Caco-2 (cell line): ENCODE measurements at regions of chr7 and their contacts with region 1.

Region 1: GRCh38 chr7:134355927-134356326 is 39.2 kb upstream of the SLC35B4 start:
- DNase-seq: no peak
- H3K4me3 ChIP-seq: no peak overlapping the region
- H3K4me3 Mint-ChIP-seq: no peak overlapping the region
- H3K27ac Mint-ChIP-seq: no peak overlapping the region
- H3K4me1 ChIP-seq: no peaks in the 10 kb centered on the region
- H3K4me1 Mint-ChIP-seq: no peaks in the 10 kb centered on the region
- H3K27me3 ChIP-seq: no peaks in the 10 kb centered on the region
- H3K27me3 Mint-ChIP-seq: peaks cover 3% of the 10 kb centered on the region
- CTCF ChIP-seq: no peak

Region 2: GRCh38 chr7:134016223-134016941 is 339.5 kb before region 1 on chr7:
- CTCF ChIA-PET with region 1: no interaction called
- POLR2A ChIA-PET with region 1: no interaction called
- intact Hi-C with region 1: loop called (anchors 1 kb)
- DNase-seq: peak; percentile 34 to 52
- H3K4me3 ChIP-seq: no peak overlapping the region
- H3K4me3 Mint-ChIP-seq: no peak overlapping the region
- H3K27ac Mint-ChIP-seq: no peak overlapping the region
- H3K4me1 ChIP-seq: peaks cover 8% of the 10 kb centered on the region; the same call in 1 of the 2 replicates
- H3K4me1 Mint-ChIP-seq: peaks cover 12% of the 10 kb centered on the region
- H3K27me3 ChIP-seq: no peaks in the 10 kb centered on the region
- H3K27me3 Mint-ChIP-seq: no peaks in the 10 kb centered on the region
- CTCF ChIP-seq: peak; percentile 77 to 83

Region 3: GRCh38 chr7:134126966-134127848 is 228.7 kb before region 1 on chr7 and contains the start of gene LRGUK:
- CTCF ChIA-PET with region 1: no interaction called
- POLR2A ChIA-PET with region 1: no interaction called
- intact Hi-C with region 1: loop called (anchors 2 kb)
- DNase-seq: peak; percentile 84 to 87
- H3K4me3 ChIP-seq: peak within 1 kb of the TSS; percentile 79
- H3K4me3 Mint-ChIP-seq: peak within 1 kb of the TSS; percentile 77
- H3K27ac Mint-ChIP-seq: peak within 1 kb of the TSS; percentile 63
- H3K4me1 ChIP-seq: no peaks in the 10 kb centered on the region
- H3K4me1 Mint-ChIP-seq: peaks cover 7% of the 10 kb centered on the region
- H3K27me3 ChIP-seq: no peaks in the 10 kb centered on the region
- H3K27me3 Mint-ChIP-seq: peaks cover 27% of the 10 kb centered on the region
- CTCF ChIP-seq: no peak
- total RNA-seq, gene LRGUK: 0.09 TPM in 1 of 2 replicates, not detected in the other

Region 4: DNA sequence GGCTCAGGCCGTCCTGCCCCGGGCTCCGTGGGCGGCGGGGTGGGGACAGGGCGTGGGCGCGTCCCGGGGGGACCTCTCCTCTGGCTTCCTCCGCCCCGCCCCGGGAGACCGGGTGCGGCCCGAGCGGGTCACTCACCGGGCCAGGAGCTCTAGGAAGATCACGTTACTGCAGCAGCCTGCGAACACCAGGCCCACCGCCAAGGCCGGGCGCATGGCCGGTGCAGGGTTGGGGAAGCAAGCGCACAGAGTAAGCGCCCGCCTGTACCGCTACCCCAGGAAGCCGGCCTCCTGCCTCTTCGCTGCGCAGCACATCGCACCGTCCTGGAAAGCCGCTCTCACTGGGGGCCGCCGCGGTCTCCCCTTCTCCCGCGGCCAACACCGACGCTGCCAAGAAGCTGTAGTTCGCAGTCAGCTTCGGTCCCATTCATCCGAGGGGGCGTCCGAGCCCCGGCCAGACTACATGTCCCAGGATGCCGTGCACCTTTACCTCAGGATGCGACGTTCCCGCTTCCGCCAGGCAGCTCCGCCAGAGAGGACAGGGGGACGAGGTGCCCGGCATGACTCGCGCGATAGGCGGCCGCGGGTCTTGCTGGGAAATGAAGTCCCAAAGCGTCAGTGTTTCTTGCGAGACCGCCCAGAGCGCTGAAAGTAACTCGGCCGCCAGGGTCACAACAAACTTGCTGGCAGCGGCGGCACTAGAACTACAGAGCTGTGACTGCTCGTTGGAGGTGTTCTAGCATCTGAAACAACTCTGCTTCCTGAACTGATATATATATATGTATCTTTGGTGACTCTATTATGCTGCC is 39.2 kb before region 1 on chr7 and contains the start of gene SLC35B4:
- CTCF ChIA-PET with region 1: interaction called, 13 read pairs
- POLR2A ChIA-PET with region 1: no interaction called
- intact Hi-C with region 1: no loop called
- DNase-seq: peak; percentile 97 to 98
- H3K4me3 ChIP-seq: peak within 1 kb of the TSS; percentile 78
- H3K4me3 Mint-ChIP-seq: peak within 1 kb of the TSS; percentile 80
- H3K27ac Mint-ChIP-seq: peak within 1 kb of the TSS; percentile 36
- H3K4me1 ChIP-seq: no peaks in the 10 kb centered on the region
- H3K4me1 Mint-ChIP-seq: peaks cover 7% of the 10 kb centered on the region
- H3K27me3 ChIP-seq: no peaks in the 10 kb centered on the region
- H3K27me3 Mint-ChIP-seq: peaks cover 9% of the 10 kb centered on the region
- CTCF ChIP-seq: peak; percentile 34 to 42
- total RNA-seq, gene SLC35B4: 17.1 and 18.2 TPM in 2 replicates